ENCODE measurements at regions of chr5 and their contacts with region 1.

Region 1: DNA sequence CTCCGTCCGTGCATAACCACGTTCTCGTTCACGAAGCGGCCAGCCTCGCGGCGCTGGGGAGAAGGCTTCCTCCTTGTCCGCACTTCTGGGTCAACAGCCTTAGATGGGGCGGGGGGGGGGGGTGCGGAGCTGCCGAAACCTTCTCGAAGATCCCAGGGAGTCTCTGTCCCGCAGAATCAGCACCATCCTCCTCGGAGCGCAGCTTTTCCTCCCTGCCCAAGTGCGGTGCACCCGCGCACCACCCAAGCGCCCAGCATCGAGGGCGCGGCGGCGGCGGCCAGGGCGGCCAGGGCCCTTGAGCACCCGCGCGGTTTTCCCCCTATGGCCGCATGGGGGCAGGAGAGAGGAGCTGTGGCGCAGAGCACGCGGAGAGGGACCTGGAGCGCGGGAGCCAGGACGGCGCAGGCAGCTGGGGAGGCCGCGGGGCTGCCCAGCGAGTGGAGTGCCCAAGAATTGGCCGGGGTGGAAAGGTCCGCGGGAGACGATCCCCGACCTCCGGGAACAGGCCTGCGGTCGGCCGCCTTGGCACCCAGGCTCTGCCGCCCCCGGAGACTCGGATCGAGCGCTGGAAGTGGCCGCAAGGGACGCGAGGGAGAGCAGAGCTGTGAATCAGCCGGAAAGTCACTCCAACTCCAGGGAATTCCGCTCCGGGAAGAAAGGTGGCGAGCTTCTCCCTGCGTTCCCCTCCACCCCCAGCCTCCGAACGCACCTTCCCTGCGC is 43.1 kb downstream of the TMEM174 start:
- DNase-seq: no peak
- H3K4me3 ChIP-seq: peak overlapping the region; percentile 45
- H3K27me3 ChIP-seq: no peaks in the 10 kb centered on the region
- CTCF ChIP-seq: peak; percentile 65

Region 2: GRCh38 chr5:72920690-72921502 is 295.2 kb before region 1 on chr5:
- CTCF ChIA-PET with region 1: interaction called, 13 read pairs
- POLR2A ChIA-PET with region 1: no interaction called
- DNase-seq: no peak
- H3K4me3 ChIP-seq: no peak overlapping the region
- H3K27me3 ChIP-seq: no peaks in the 10 kb centered on the region
- CTCF ChIP-seq: 0 out of 2 replicates have a peak, but pooled peaks have one; percentile 20

Region 3: DNA sequence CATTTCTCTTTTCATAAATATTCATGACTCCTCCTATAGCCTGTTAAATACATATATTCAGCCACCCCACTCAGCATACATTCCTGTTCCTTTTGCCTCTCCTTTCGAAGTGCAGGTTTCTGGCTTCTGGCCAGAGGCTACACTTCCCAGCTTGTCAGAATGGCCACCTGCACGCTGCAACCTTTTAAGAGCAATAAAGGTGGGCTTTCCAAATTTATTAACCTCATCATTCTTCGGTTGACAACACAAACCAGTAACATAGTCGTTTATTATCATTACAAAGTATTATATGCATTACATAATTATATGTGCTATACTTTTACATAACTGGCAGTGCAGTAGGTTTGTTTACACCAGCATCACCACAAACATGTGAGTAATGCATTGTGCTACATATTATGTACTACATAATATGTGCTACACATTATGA is 112.2 kb before region 1 on chr5:
- CTCF ChIA-PET with region 1: interaction called, 10 read pairs
- POLR2A ChIA-PET with region 1: interaction called, 16 read pairs
- DNase-seq: no peak
- H3K4me3 ChIP-seq: no peak overlapping the region
- H3K27me3 ChIP-seq: no peaks in the 10 kb centered on the region
- CTCF ChIP-seq: no peak

Region 4: GRCh38 chr5:73229209-73229661 is 13.2 kb after region 1 on chr5:
- CTCF ChIA-PET with region 1: interaction called, 35 read pairs
- POLR2A ChIA-PET with region 1: interaction called, 3 read pairs
- DNase-seq: peak; percentile 59
- H3K4me3 ChIP-seq: no peak overlapping the region
- H3K27me3 ChIP-seq: no peaks in the 10 kb centered on the region
- CTCF ChIP-seq: no peak

Region 5: DNA sequence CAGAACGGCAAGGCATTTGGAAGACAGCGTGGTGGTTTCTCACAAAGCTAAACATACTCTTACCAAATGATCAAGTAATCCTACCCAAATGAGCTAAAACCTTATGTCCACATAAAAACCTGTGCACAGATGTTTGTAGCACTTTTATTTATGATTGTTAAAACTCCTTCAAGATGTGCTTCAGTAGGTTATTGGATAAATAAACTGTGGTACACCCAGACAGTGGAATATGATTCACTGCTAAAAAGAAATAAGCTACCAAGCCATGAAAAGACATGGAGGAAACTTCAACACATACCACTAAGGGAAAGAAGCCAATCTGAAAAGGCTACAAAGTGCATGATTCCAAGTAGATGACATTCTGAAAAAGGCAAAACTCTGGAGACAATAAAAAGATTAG is 138.4 kb after region 1 on chr5:
- CTCF ChIA-PET with region 1: interaction called, 10 read pairs
- POLR2A ChIA-PET with region 1: no interaction called
- DNase-seq: no peak
- H3K4me3 ChIP-seq: no peak overlapping the region
- H3K27me3 ChIP-seq: no peaks in the 10 kb centered on the region; the same call in none of the 2 replicates
- CTCF ChIP-seq: no peak

Region 6: DNA sequence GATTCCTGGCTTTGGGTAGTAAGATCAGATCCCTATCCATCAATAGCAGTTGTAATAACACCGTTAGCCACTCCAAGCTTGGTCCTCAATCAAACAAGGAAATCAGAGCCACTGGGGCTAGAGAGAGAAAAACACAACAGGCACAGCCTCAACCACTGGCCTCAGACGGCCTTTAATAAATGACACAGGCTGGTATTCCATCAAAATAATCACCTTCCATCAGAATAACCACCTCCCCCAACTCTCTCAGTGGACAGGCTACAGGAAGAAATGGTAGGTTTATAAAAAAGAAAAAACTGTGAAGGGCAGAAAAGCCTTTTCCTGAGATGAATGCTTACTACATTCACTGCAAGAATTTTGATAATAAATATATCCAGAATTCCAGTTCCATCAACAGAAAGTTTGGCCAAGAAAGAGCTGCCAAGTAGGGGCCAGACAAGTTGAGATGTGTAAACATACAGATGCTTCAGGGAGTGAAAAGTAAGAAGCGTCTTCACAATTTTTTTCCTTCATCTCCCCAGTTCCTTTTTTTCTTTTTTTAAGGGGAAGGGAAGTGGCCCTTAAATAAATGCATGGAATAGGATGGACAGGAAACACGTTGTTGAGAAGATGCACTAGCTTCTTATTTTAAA is 227.1 kb after region 1 on chr5:
- CTCF ChIA-PET with region 1: interaction called, 24 read pairs
- POLR2A ChIA-PET with region 1: no interaction called
- DNase-seq: no peak
- H3K4me3 ChIP-seq: no peak overlapping the region
- H3K27me3 ChIP-seq: no peaks in the 10 kb centered on the region
- CTCF ChIP-seq: no peak